Sciatic nerve (tissue), 2 donors: ENCODE measurements at regions of chrX and their contacts with region 1.

Region 1: DNA sequence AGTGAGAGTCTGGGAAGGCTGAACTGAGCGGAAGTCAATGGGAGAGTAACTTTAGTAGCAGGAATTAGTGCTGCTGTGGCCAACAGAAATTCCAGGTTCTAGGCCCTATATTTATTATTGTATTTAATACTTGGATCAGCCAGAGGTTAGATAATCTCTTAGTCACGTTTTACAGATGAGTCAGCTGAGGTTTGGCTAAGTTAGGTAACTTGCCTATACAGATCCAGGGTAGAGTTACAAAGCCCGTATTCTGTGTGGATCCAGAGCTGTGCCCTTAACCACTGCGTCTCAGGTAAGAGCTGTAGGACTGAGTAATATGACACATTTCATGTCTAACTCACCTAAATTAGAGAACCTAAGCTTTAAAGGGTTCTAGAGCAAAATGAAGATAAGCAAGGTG is 20.5 kb downstream of the PSMD10 start:
- DNase-seq: no peak
- ATAC-seq: no peak

Region 2: DNA sequence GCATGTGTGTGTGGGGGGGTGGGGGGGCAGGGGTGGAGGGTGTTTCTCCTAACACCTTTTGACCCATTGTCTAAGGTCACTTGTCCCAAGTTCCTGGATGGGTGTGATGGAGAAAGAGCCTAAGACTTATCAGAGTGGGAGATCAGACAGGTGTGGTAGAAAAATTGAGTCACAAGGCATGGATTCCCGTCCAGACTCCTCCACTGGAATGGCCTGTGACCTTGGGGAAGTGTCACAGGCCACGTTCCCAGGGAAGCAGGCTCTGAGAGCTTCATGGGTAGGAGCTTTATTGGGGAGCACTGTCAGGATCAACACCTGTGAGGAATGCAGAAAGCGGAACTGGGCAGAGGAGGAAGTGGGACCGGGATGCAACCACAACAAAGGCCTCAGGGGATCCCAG is 1064.6 kb before region 1 on chrX:
- intact Hi-C with region 1: loop called (anchors 2 kb)
- DNase-seq: no peak
- ATAC-seq: no peak

Region 3: DNA sequence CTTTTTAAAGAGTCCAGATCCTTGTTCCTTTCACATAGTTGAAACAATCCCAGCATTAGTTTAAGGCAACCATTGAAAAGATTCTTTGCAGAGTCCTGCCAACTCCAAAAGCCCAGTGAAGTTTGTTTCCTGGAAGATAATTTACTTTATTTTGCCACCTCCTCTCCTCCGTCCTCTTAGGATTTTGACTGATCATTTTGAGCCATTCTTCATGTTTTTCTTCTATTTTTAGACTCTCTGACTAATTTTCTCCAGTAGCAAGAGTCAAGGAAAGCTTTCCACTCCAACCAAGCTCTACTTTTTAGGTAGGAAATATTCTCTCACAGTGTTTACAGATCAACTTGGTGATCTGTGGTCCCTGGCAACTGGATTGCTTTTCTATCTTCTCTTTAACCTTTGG is 283.1 kb before region 1 on chrX:
- intact Hi-C with region 1: no loop called
- DNase-seq: no peak
- ATAC-seq: peak; percentile 71

Region 4: DNA sequence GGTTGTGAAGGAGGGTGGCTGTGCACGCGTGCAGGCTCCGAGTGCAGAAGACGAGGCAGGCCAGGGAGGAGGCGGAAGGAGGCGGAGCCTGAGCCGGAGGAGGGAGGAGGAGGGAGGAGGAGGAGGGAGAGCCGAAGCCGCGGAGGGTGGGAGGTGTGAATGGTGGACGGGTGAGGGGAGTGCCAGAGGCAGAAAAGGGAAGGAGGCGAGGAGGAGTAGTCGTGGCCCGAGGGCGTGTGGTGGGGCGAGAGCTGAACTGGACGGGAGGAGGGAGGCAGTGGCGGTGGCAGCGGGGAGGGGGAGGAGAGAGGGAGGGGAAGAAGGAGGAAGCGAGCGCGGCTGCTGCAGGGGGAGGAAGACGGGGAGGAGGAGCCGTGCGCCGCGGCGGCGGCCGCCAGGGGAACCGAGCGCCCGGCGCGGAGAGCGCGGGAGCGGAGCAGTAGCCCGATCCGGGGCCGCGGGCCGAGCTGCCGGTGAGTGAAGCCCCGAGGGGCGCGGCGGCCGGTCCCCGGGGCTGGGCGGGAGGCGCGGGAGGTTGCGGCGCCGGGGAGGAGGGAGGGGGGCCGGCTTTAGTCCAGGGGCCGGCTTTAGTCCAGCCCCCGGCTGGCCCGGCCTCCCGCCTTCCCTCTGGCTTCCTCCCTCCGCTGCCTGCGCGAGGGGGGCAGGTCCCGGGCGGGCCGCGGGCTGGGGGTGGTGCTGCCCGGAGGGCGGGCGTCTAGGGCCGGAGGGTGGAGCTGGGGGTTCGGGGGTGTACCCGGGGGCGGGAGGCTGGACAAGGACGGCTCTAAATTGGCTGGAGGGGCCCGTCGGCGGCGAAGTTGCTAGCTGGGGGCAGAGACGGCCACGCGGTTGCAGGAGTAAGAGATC is 1931.6 kb after region 1 on chrX and contains the start of gene TMEM164:
- intact Hi-C with region 1: no loop called
- DNase-seq: peak; percentile 91
- ATAC-seq: peak; percentile 94
- total RNA-seq, gene TMEM164: 12.8 TPM